MCF 10A (cell line): ENCODE measurements at regions of chr7 and their contacts with region 1.

Region 1: DNA sequence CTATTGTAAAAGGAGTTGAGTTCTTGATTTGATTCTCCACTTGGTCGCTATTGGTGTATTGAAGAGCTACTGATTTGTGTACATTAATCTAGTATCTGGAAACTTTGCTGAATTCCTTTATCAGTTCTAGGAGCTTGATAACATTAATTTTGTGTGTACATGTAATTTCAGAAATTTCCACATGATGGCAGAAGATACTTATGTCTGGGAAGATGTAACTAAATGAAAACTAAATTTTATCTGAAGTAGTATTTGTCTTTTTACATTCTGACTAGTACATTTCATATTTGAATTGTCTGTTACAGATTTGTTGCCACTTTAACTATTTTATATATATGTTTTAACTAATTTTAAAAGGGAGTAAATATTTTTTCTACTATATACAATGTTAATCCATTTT is 27.6 kb downstream of the SDHAF3 start:
- DNase-seq: peak; percentile 45
- H3K4me3 Mint-ChIP-seq: no peak overlapping the region
- H3K27ac Mint-ChIP-seq: no peak overlapping the region
- H3K4me1 Mint-ChIP-seq: no peaks in the 10 kb centered on the region
- H3K27me3 Mint-ChIP-seq: no peaks in the 10 kb centered on the region
- CTCF ChIP-seq: peak; percentile 62

Region 2: DNA sequence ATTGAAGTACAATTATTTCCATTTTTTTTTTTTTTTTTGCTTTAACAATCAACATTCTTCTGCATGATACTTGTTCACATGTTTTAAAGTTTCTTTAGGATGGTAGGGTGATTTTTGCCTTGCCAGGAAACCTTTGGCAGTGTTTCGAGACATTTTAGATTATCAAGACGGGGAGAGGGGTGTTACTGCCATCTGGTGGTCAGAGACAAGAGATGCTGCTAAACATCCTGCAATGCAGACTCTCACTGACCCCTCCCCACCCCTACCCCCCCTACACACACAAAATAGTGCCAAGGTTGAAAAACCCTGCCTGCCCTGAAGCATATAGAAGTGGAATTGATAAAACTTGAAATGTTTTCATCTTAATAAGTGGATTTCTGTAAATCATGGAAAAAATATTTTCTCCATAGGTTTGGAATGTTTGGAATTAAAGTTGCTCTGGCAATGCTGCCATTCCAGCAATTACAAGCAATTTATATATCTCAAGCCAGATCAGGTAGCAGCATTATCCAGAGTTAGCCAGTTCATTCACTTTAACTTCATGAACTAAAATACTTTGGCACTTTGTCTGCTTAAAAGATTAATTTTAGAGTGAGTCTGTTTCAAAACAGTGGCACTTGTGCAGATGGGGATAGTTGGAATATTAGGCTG is 34.5 kb after region 1 on chr7:
- CTCF ChIA-PET with region 1: interaction called, 11 read pairs
- POLR2A ChIA-PET with region 1: no interaction called
- intact Hi-C with region 1: loop called (anchors 1 kb)
- DNase-seq: peak; percentile 77
- H3K4me3 Mint-ChIP-seq: no peak overlapping the region
- H3K27ac Mint-ChIP-seq: no peak overlapping the region
- H3K4me1 Mint-ChIP-seq: peaks cover 4% of the 10 kb centered on the region
- H3K27me3 Mint-ChIP-seq: no peaks in the 10 kb centered on the region
- CTCF ChIP-seq: peak; percentile 74

Region 3: GRCh38 chr7:97342512-97342911 is 197.4 kb after region 1 on chr7:
- CTCF ChIA-PET with region 1: no interaction called
- POLR2A ChIA-PET with region 1: no interaction called
- intact Hi-C with region 1: no loop called
- DNase-seq: no peak
- H3K4me3 Mint-ChIP-seq: no peak overlapping the region
- H3K27ac Mint-ChIP-seq: no peak overlapping the region
- H3K4me1 Mint-ChIP-seq: no peaks in the 10 kb centered on the region
- H3K27me3 Mint-ChIP-seq: peaks cover 8% of the 10 kb centered on the region
- CTCF ChIP-seq: no peak